Activated CD4-positive, alpha-beta memory T cell treated with anti-CD3 and anti-CD28 coated beads for 36 hours (primary cell): ENCODE measurements at regions of chr12 and their contacts with region 1.

Region 1: DNA sequence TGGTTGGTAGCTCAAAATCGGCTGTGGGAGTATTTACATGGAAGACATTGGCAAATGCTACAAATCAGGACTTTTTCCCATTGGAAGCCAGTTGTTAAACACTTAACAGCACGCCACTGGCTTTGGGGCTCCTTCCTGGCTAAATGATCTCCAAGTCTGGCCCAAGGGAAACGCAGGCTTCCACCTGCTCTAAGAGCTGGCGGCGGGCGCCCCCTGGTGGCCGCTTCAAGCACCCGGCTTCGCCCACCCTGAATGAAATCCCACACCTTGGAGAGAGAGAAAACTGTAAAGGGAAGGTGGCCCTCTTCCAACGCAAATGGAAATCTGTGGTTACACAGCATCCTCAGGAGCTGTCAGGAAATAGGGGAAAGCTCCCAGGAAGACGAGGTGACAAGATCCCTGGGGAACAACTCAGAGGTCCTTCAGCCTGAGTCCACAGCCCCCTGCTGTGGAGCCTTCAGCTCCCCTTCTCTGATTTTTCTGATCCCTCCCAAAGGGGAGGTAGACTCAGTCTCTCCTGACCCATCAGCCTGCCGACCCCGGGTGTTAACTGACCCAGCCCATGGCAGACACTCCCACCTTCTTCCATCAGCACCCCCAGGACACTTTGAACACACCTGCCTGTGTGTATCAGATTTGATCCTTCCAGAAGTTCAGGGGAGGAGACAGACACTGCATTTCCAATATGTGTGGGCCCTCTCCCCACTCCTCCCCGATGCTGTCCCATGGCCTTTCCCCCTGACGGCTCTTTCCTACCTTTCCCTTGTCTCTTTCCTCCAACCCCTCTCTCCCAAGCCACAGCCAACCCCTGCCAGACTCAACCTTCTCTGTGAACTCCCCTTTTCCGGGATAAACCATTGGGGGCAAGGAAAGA is 15.4 kb downstream of the SELPLG start:
- DNase-seq: peak; percentile 84
- H3K4me3 Mint-ChIP-seq: no peak overlapping the region
- H3K27ac Mint-ChIP-seq: peak overlapping the region; percentile 25
- H3K4me1 Mint-ChIP-seq: peaks cover 54% of the 10 kb centered on the region
- H3K27me3 Mint-ChIP-seq: no peaks in the 10 kb centered on the region

Region 2: DNA sequence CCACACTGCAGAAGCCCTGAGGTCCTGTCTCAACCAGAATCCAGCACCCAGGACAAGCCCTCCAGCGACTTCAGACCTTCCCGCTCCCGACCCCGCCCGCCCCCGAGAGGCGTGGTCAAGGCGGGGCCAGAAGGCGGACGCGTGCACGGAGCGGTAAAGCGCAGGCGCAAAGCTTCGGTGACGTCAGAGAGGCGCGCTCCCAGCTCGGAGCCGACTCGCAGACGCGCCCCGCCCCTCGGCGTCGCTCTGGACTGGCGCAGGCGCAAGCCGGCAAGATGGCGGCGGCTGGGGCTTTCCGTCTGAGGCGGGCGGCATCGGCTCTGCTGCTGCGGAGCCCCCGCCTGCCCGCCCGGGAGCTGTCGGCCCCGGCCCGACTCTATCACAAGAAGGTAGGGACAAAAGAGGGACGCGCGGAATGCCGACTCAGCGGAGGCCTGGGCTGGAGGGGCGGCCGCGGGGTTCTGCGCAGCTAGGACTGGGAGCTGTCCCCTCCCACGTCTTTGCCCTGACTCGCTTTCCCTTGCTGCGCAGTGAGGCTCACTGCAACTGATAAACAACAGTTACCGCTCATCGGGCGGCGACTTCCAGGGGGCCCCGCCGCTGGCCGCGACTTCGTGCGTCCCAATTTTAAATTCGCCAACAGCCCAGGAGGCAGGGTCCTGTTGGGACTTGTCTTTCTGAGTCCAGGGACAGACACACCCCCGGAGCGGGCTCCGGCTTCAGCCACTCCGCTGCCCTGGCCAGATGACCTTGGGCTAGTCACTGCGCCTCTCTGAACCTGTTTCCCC is 55.8 kb before region 1 on chr12 and contains the start of gene ISCU:
- CTCF ChIA-PET with region 1: interaction called, 472 read pairs
- POLR2A ChIA-PET with region 1: interaction called, 48 read pairs
- intact Hi-C with region 1: loop called (anchors 1 kb)
- DNase-seq: peak; percentile 99
- H3K4me3 Mint-ChIP-seq: peak within 1 kb of the TSS; percentile 100
- H3K27ac Mint-ChIP-seq: peak within 1 kb of the TSS; percentile 99
- H3K4me1 Mint-ChIP-seq: peaks cover 57% of the 10 kb centered on the region
- H3K27me3 Mint-ChIP-seq: no peaks in the 10 kb centered on the region
- total RNA-seq, gene ISCU: 88.6 to 94.3 TPM

Region 3: DNA sequence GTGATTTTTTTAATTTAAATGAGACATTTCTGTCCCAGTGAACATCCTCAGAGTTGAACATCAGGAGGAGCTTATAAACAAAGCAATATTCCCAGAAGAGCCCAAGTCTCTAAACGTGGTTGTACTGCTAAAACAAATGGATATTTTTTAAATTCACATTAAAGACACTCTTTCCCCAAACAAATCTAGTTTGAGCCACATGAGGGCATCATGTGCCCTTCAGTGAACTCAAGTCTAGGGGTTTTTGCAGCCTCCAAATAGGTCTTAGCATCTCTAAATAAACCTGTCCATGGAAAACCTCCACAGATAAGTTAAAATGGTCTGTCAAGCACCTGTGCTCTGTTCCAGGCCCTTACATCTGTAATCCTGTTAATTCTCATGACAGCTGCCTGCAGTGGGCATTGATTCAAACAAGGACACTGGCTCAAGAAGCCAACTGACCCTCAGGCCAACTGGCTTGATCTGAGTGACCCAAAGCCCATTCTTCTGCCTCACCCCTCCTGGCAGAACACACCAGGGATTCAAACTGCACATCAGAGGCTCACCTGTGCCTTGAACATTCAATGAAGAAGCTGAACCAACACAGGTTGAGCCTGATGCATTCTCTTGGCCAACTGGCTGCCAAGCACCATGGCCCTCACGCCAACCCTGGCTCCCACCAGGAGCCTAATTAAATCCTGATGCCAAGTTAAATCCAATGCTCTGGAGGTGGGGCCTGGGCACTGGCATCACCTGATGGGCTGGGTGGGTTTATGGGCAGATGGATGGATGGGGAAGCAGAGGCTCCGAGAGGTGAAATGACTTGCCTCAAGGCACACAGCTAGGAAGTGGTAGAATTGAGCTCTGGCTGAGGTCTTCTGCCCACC is 47.3 kb before region 1 on chr12:
- CTCF ChIA-PET with region 1: interaction called, 472 read pairs
- POLR2A ChIA-PET with region 1: interaction called, 20 read pairs
- intact Hi-C with region 1: loop called (anchors 1 kb)
- DNase-seq: peak; percentile 18
- H3K4me3 Mint-ChIP-seq: no peak overlapping the region
- H3K27ac Mint-ChIP-seq: no peak overlapping the region
- H3K4me1 Mint-ChIP-seq: peaks cover 76% of the 10 kb centered on the region
- H3K27me3 Mint-ChIP-seq: no peaks in the 10 kb centered on the region

Region 4: GRCh38 chr12:108576660-108577234 is 41.6 kb before region 1 on chr12:
- CTCF ChIA-PET with region 1: interaction called, 472 read pairs
- POLR2A ChIA-PET with region 1: interaction called, 8 read pairs
- intact Hi-C with region 1: loop called (anchors 1 kb)
- DNase-seq: no peak
- H3K4me3 Mint-ChIP-seq: no peak overlapping the region
- H3K27ac Mint-ChIP-seq: no peak overlapping the region
- H3K4me1 Mint-ChIP-seq: peaks cover 33% of the 10 kb centered on the region
- H3K27me3 Mint-ChIP-seq: no peaks in the 10 kb centered on the region

Region 5: GRCh38 chr12:108599948-108600701 is 18.2 kb before region 1 on chr12:
- CTCF ChIA-PET with region 1: interaction called, 11 read pairs
- POLR2A ChIA-PET with region 1: interaction called, 4 read pairs
- intact Hi-C with region 1: no loop called
- DNase-seq: no peak
- H3K4me3 Mint-ChIP-seq: no peak overlapping the region
- H3K27ac Mint-ChIP-seq: no peak overlapping the region
- H3K4me1 Mint-ChIP-seq: no peaks in the 10 kb centered on the region
- H3K27me3 Mint-ChIP-seq: no peaks in the 10 kb centered on the region

Region 6: DNA sequence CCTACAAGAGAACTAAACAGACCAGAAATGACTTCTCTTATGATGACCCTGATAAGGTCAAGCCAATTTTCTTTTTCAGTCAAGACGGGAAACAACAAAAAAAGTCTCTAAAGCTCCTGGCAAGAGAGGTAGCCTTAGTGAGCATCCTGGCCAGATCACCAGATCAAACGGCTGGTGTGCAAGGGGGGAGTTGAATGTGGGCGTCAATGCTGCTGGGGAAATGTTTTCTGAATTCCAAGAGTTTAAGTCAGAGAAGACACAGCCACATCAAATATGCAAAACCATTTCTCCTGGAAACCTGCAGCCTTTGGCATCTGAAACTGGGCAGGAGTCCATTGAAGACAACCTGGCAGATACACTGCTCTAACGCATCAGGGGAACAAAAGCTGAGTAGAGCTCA is 31.4 kb after region 1 on chr12:
- CTCF ChIA-PET with region 1: interaction called, 14 read pairs
- POLR2A ChIA-PET with region 1: interaction called, 3 read pairs
- intact Hi-C with region 1: no loop called
- DNase-seq: no peak
- H3K4me3 Mint-ChIP-seq: no peak overlapping the region
- H3K27ac Mint-ChIP-seq: peak overlapping the region; percentile 50
- H3K4me1 Mint-ChIP-seq: peaks cover 38% of the 10 kb centered on the region
- H3K27me3 Mint-ChIP-seq: no peaks in the 10 kb centered on the region

Region 7: DNA sequence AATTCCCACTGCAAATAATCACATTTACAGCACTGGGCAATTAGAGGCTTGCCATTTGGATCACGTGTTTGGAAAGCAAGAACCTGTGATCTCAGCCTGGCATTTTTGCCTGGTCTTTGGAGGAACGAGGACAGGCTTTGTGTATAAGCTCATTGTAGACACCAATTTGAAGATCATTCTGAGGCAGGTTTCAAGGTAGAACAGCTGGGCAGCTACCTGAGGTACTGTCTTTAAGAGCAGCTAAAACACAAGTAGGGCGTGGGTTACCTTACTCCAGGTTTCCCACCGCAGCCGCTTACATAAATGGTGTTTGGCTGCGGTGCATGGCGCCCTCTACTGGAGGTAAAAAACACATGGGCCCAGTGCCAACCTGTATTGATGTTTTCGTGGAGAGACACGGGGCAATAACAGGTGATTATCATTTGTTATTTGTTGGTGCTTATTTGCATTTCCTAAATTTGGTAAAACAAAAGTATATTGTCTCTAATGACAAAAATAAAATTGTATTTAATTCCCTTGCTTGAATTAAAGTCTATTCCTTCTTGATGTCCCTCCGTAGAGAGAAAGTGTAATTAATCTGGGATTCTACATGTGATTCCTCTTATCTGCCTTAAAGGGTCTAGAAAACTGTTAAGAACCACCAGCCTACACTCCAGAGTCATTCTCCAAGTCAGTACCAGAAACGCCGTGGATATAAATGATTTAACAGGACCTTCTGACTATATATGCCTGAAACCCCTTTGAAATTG is 332.8 kb after region 1 on chr12:
- CTCF ChIA-PET with region 1: interaction called, 12 read pairs
- POLR2A ChIA-PET with region 1: no interaction called
- intact Hi-C with region 1: no loop called
- DNase-seq: peak; percentile 80
- H3K4me3 Mint-ChIP-seq: no peak overlapping the region
- H3K27ac Mint-ChIP-seq: no peak overlapping the region
- H3K4me1 Mint-ChIP-seq: peaks cover 2% of the 10 kb centered on the region
- H3K27me3 Mint-ChIP-seq: peaks cover 6% of the 10 kb centered on the region